Activated CD4-positive, alpha-beta T cell treated with anti-CD3 and anti-CD28 coated beads, Interleukin-2, amount 10 ng/mL, durations not matched to agents 7 days and 5 days (primary cell): ENCODE measurements at regions of chr5 and their contacts with region 1.

Region 1: DNA sequence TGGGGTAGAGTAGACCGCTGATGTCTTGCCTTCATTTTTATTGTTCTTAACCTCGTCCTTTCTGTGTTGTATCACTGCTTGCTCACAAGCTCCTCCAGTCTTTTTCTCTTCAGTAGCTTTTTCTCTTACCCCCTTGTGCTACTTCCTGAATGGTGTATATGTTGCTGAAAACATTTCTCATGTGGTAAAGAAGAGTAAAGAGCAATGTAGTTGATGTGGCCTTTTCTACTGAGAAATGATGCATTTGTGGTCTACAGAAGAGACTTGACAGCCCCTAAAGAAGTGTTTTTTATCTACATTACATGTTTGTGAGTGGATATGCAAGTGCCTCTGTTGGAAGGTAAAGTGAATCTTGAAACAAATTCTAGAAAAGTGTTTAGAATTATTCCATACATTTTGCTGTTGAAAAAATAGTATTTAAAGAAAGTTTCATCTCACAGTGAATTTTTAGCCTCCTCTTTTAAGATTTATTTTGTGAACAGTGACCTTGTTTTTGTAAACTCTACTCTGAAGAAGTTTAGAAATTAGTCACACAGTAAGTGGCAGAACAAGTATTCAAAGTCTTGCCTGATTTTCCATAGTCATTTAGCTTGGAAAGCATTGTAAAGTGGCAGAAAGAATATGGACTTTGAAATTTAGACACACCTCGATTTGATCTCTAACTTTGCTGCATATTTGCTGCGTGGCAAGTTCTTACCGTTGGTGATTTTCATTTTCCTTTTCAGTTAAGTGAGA is 17.4 kb downstream of the CDC42SE2 start:
- DNase-seq: peak; percentile 49
- H3K4me3 Mint-ChIP-seq: peak overlapping the region; percentile 77
- H3K27ac Mint-ChIP-seq: peak overlapping the region; percentile 96
- H3K4me1 Mint-ChIP-seq: peaks cover 88% of the 10 kb centered on the region
- H3K27me3 Mint-ChIP-seq: no peaks in the 10 kb centered on the region

Region 2: DNA sequence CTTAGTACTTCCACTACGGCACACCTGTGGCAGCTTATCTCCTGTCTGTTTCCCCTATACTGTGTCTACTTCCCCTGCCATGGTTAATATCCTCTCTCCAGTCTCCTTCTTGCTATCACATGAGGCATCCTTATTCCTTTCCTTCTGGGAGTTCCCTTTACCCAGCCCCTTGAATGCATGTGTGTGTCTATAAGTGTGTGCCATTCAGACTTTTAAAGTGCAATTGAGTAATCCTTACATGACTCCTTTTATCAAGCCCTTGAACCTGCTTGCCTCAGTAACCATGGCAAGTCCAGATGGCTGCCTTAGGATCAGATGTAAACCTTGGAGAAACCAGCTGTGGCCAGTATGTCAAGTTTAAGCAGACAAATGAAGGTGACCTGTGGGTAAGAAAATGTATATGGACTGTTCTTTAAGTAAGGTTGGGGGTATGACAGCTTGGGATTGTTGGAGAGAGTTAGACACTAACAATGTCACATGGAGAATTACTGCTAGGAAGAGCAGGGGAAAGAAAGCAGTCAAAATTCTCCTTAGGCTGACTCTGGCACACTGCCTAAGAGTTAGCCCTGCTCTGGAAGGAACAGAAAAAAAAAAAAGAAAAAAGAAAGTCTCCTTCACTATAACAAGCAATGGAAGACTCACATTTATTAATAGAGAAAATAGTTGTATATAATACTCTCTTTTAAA is 258.3 kb before region 1 on chr5:
- CTCF ChIA-PET with region 1: no interaction called
- POLR2A ChIA-PET with region 1: no interaction called
- DNase-seq: no peak
- H3K4me3 Mint-ChIP-seq: no peak overlapping the region
- H3K27ac Mint-ChIP-seq: no peak overlapping the region
- H3K4me1 Mint-ChIP-seq: no peaks in the 10 kb centered on the region
- H3K27me3 Mint-ChIP-seq: no peaks in the 10 kb centered on the region

Region 3: DNA sequence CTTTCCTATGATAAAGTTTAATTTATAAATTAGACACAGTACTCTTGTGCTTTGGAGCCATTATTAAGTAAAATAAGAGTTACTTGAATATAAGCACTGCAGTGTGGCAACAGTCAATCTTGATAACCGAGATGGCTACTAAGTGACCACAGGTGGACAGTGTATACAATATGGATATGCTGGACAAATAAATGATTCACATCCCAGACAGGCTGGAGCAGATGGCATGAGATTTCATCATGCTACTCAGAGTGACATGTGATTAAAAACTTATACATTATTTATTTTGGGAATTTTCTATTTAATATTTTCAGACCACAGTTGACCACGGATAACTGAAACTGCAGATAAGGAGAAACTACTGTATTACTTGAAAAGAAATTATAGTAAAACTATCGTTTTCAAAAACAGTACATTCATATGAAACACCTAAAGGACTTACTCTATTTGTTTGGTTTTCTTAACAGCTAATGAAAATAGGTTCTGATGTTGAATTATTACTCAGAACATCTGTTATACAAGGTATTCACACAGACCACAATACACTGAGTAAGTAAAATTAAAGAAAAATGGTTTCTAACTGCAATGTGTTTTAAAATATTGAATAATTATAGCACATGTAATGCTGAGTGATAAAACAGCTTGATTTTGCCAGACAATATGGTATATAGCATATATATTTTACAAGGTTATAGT is 94.6 kb before region 1 on chr5:
- CTCF ChIA-PET with region 1: no interaction called
- POLR2A ChIA-PET with region 1: no interaction called
- DNase-seq: no peak
- H3K4me3 Mint-ChIP-seq: no peak overlapping the region
- H3K27ac Mint-ChIP-seq: no peak overlapping the region
- H3K4me1 Mint-ChIP-seq: peaks cover 10% of the 10 kb centered on the region
- H3K27me3 Mint-ChIP-seq: no peaks in the 10 kb centered on the region

Region 4: GRCh38 chr5:131263648-131264450 is 17.5 kb before region 1 on chr5 and contains the start of gene CDC42SE2:
- CTCF ChIA-PET with region 1: interaction called, 18 read pairs
- POLR2A ChIA-PET with region 1: interaction called, 4 read pairs
- DNase-seq: peak; percentile 83
- H3K4me3 Mint-ChIP-seq: peak within 1 kb of the TSS; percentile 84
- H3K27ac Mint-ChIP-seq: peak within 1 kb of the TSS; percentile 97
- H3K4me1 Mint-ChIP-seq: peaks cover 43% of the 10 kb centered on the region
- H3K27me3 Mint-ChIP-seq: no peaks in the 10 kb centered on the region
- total RNA-seq, gene CDC42SE2: 145 TPM

Region 5: GRCh38 chr5:131270809-131271208 is 10.5 kb before region 1 on chr5:
- CTCF ChIA-PET with region 1: interaction called, 18 read pairs
- POLR2A ChIA-PET with region 1: no interaction called
- DNase-seq: no peak
- H3K4me3 Mint-ChIP-seq: peak overlapping the region; percentile 70
- H3K27ac Mint-ChIP-seq: peak overlapping the region; percentile 87
- H3K4me1 Mint-ChIP-seq: peaks cover 71% of the 10 kb centered on the region
- H3K27me3 Mint-ChIP-seq: no peaks in the 10 kb centered on the region

Region 6: DNA sequence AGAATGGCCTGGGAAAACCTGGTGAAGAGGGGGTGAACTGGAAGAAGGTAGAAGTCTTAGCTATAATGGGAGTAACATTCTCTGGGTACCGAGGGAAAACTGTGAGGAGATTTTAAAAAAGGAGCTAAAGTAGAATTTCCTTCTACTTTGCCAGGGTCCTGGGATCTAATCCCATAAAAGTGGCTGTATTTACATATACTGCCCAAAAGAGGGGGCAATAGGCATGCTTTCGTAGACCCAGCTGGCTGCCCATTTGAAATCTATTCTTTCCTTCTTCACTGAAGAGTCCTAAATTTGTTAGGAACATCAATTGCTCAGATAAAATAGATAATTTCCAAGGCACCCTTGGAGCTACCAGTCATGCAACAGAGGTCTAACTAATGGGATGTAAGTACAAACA is 141.8 kb after region 1 on chr5:
- CTCF ChIA-PET with region 1: no interaction called
- POLR2A ChIA-PET with region 1: interaction called, 12 read pairs
- DNase-seq: no peak
- H3K4me3 Mint-ChIP-seq: no peak overlapping the region
- H3K27ac Mint-ChIP-seq: no peak overlapping the region
- H3K4me1 Mint-ChIP-seq: peaks cover 12% of the 10 kb centered on the region
- H3K27me3 Mint-ChIP-seq: no peaks in the 10 kb centered on the region